GM12878 (cell line): ENCODE measurements at regions of chr3 and their contacts with region 1.

Region 1: GRCh38 chr3:171347301-171348039 is 112.7 kb downstream of the TNIK start:
- DNase-seq: peak; percentile 95
- ATAC-seq: peak; percentile 84
- H3K4me3 ChIP-seq: peak overlapping the region; percentile 33
- H3K27ac ChIP-seq: peak overlapping the region; percentile 94
- H3K4me1 ChIP-seq: peaks cover 78% of the 10 kb centered on the region
- H3K27me3 ChIP-seq: no peaks in the 10 kb centered on the region
- CTCF ChIP-seq: no peak
- EP300 ChIP-seq: peak in 1 of 2 experiments; percentile 70; a peak in 3 of 4 replicates
- POLR2A ChIP-seq: no peak
- RAD21 ChIP-seq: no peak

Region 2: DNA sequence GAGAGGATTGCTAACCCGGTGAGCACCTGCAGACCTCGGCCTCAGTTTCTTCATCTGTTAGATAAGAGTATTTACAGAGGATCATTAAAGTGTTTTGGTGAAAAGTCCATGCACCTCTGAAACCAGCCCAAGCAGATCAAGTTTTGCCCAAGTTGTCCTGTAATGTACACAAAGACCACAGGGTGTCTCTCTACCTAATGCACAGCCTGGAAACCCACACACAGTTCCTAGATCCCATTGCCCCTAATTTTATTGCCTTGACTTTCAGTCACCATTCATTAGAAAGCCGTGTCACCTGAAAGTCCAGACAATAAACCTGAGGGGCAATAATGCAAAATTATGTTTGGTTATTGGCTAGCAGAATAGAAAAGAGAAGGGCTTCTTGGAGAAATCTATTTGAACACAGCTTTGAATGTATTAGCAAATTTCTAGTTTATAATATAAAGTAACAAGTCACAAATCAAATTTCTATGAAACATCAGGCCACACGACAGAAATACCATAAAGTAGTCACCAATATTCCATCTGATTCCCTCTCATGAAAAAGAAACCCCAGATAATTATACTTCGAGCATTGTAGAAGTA is 159.7 kb before region 1 on chr3:
- CTCF ChIA-PET with region 1: interaction called, 5 read pairs
- POLR2A ChIA-PET with region 1: no interaction called
- RAD21 ChIA-PET with region 1: interaction called, 12 read pairs
- SMC1A ChIA-PET with region 1: interaction called, 32 read pairs
- in situ Hi-C with region 1: no loop called
- intact Hi-C with region 1: loop called (anchors 5 kb)
- DNase-seq: no peak
- ATAC-seq: peak; percentile 59
- H3K4me3 ChIP-seq: no peak overlapping the region
- H3K27ac ChIP-seq: no peak overlapping the region
- H3K4me1 ChIP-seq: peaks cover 42% of the 10 kb centered on the region
- H3K27me3 ChIP-seq: no peaks in the 10 kb centered on the region
- CTCF ChIP-seq: peak; percentile 65 to 77 (median 68)
- EP300 ChIP-seq: no peak
- POLR2A ChIP-seq: no peak
- RAD21 ChIP-seq: peak; percentile 80

Region 3: GRCh38 chr3:171284308-171285075 is 63.0 kb before region 1 on chr3:
- CTCF ChIA-PET with region 1: interaction called, 8 read pairs
- POLR2A ChIA-PET with region 1: interaction called, 7 read pairs
- RAD21 ChIA-PET with region 1: interaction called, 97 read pairs
- SMC1A ChIA-PET with region 1: interaction called, 70 read pairs
- in situ Hi-C with region 1: no loop called
- intact Hi-C with region 1: loop called (anchors 2 kb)
- DNase-seq: peak; percentile 76
- ATAC-seq: peak; percentile 64
- H3K4me3 ChIP-seq: peak overlapping the region; percentile 36; the same call in 1 of the 2 replicates
- H3K27ac ChIP-seq: peak overlapping the region; percentile 96
- H3K4me1 ChIP-seq: peaks cover 61% of the 10 kb centered on the region
- H3K27me3 ChIP-seq: no peaks in the 10 kb centered on the region
- CTCF ChIP-seq: no peak
- EP300 ChIP-seq: peak in 1 of 2 experiments; percentile 21; a peak in 1 of 4 replicates
- POLR2A ChIP-seq: no peak
- RAD21 ChIP-seq: no peak

Region 4: DNA sequence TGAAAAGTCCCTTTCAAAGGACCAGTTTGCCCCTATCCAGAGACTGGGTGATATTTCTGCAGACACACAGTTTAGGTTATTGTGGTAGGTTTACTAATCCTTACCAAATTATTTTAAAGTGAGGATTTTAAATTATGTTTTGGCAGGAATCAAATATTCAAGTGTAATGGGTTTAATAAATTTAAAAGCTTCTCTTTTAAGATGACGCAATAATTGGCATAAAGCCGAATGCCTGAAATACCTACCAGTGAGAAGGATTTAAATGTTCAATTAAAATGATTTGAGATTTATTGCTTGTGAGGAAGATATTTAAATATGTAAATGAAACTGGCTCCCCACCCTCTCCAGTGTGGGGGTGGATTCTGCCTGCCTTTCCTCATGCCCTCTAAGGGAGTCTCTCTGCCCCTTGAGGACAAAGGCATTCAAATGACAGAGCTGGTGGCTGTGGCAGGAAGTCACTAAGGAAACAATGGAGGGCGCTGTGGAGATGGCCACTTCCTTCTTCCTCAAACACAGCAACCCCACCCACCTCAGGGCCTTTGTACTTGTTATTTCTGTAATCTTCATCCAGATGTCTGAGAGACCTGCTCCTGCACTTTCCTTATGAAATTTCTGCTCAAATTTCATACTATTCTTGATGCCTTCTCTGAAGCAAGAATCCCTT is 18.9 kb before region 1 on chr3:
- CTCF ChIA-PET with region 1: interaction called, 8 read pairs
- POLR2A ChIA-PET with region 1: interaction called, 9 read pairs
- RAD21 ChIA-PET with region 1: interaction called, 24 read pairs
- SMC1A ChIA-PET with region 1: interaction called, 89 read pairs
- in situ Hi-C with region 1: no loop called
- intact Hi-C with region 1: no loop called
- DNase-seq: no peak
- ATAC-seq: peak; percentile 60
- H3K4me3 ChIP-seq: no peak overlapping the region
- H3K27ac ChIP-seq: peak overlapping the region; percentile 6
- H3K4me1 ChIP-seq: peaks cover 38% of the 10 kb centered on the region
- H3K27me3 ChIP-seq: no peaks in the 10 kb centered on the region
- CTCF ChIP-seq: peak; percentile 27 to 36 (median 28); a peak in 4 of 6 replicates
- EP300 ChIP-seq: no peak
- POLR2A ChIP-seq: no peak
- RAD21 ChIP-seq: no peak

Region 5: GRCh38 chr3:171365489-171365888 is 18.0 kb after region 1 on chr3:
- CTCF ChIA-PET with region 1: interaction called, 15 read pairs
- POLR2A ChIA-PET with region 1: interaction called, 6 read pairs
- RAD21 ChIA-PET with region 1: interaction called, 13 read pairs
- SMC1A ChIA-PET with region 1: interaction called, 15 read pairs
- in situ Hi-C with region 1: no loop called
- intact Hi-C with region 1: no loop called
- DNase-seq: no peak
- ATAC-seq: no peak
- H3K4me3 ChIP-seq: no peak overlapping the region
- H3K27ac ChIP-seq: no peak overlapping the region
- H3K4me1 ChIP-seq: peaks cover 15% of the 10 kb centered on the region
- H3K27me3 ChIP-seq: no peaks in the 10 kb centered on the region
- CTCF ChIP-seq: no peak
- EP300 ChIP-seq: no peak
- POLR2A ChIP-seq: no peak
- RAD21 ChIP-seq: no peak

Region 6: GRCh38 chr3:171399842-171400241 is 52.4 kb after region 1 on chr3:
- CTCF ChIA-PET with region 1: no interaction called
- POLR2A ChIA-PET with region 1: no interaction called
- RAD21 ChIA-PET with region 1: interaction called, 3 read pairs
- SMC1A ChIA-PET with region 1: interaction called, 10 read pairs
- in situ Hi-C with region 1: no loop called
- intact Hi-C with region 1: no loop called
- DNase-seq: no peak
- ATAC-seq: no peak
- H3K4me3 ChIP-seq: no peak overlapping the region
- H3K27ac ChIP-seq: no peak overlapping the region
- H3K4me1 ChIP-seq: no peaks in the 10 kb centered on the region
- H3K27me3 ChIP-seq: no peaks in the 10 kb centered on the region
- CTCF ChIP-seq: no peak
- EP300 ChIP-seq: no peak
- POLR2A ChIP-seq: no peak
- RAD21 ChIP-seq: no peak

Region 7: GRCh38 chr3:171566803-171567422 is 219.4 kb after region 1 on chr3:
- CTCF ChIA-PET with region 1: interaction called, 4 read pairs
- POLR2A ChIA-PET with region 1: no interaction called
- RAD21 ChIA-PET with region 1: interaction called, 3 read pairs
- SMC1A ChIA-PET with region 1: interaction called, 8 read pairs
- in situ Hi-C with region 1: no loop called
- intact Hi-C with region 1: loop called (anchors 10 kb)
- DNase-seq: peak; percentile 42
- ATAC-seq: peak; percentile 81
- H3K4me3 ChIP-seq: no peak overlapping the region
- H3K27ac ChIP-seq: no peak overlapping the region
- H3K4me1 ChIP-seq: peaks cover 3% of the 10 kb centered on the region; the same call in 1 of the 2 replicates
- H3K27me3 ChIP-seq: no peaks in the 10 kb centered on the region
- CTCF ChIP-seq: peak; percentile 46 to 86 (median 63); a peak in 5 of 6 replicates
- EP300 ChIP-seq: no peak
- POLR2A ChIP-seq: no peak
- RAD21 ChIP-seq: peak; percentile 95